Activated CD4-positive, alpha-beta T cell treated with anti-CD3 and anti-CD28 coated beads for 36 hours (primary cell): ENCODE measurements at regions of chr2 and their contacts with region 1.

Region 1: DNA sequence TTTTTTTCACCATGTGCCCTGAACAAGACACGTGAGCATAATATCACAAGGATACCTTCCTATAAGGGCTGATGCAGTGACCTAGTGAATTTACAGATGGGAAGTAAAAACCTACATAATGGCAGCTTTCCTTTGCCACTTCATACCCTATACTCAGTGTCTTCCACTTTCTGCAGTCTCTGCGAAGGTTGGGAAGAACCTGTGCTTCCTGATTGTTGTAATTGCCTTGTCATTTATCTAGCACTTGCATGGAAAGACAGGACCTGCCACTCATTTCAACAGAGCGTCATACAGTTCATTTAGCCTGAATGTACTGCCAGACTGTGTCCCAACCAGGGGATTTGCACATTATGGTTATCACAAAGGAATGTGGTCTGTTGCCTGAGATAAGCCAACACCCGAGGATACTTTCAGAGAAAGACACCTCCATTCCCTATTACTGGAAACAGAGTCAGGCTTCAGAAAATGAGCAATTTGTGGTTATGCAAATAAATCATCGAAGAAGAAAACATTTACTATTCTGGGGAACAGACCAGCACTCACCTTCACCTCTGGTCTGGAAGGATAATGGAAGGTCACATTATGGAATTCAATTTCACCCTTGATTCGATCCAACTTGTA is 55.0 kb downstream of the ABCB11 start:
- DNase-seq: no peak
- ATAC-seq: peak; percentile 45
- H3K4me3 Mint-ChIP-seq: no peak overlapping the region
- H3K27ac Mint-ChIP-seq: no peak overlapping the region
- H3K4me1 Mint-ChIP-seq: peaks cover 7% of the 10 kb centered on the region
- H3K27me3 Mint-ChIP-seq: no peaks in the 10 kb centered on the region

Region 2: GRCh38 chr2:168816369-168816768 is 159.8 kb before region 1 on chr2:
- CTCF ChIA-PET with region 1: no interaction called
- POLR2A ChIA-PET with region 1: no interaction called
- intact Hi-C with region 1: no loop called
- DNase-seq: no peak
- ATAC-seq: no peak
- H3K4me3 Mint-ChIP-seq: no peak overlapping the region
- H3K27ac Mint-ChIP-seq: no peak overlapping the region
- H3K4me1 Mint-ChIP-seq: no peaks in the 10 kb centered on the region
- H3K27me3 Mint-ChIP-seq: no peaks in the 10 kb centered on the region

Region 3: GRCh38 chr2:169069341-169069740 is 93.2 kb after region 1 on chr2 and contains the start of gene DHRS9:
- CTCF ChIA-PET with region 1: no interaction called
- POLR2A ChIA-PET with region 1: no interaction called
- intact Hi-C with region 1: loop called (anchors 2 kb)
- DNase-seq: peak; percentile 67
- ATAC-seq: peak; percentile 88
- H3K4me3 Mint-ChIP-seq: peak within 1 kb of the TSS; percentile 69
- H3K27ac Mint-ChIP-seq: peak within 1 kb of the TSS; percentile 70
- H3K4me1 Mint-ChIP-seq: peaks cover 42% of the 10 kb centered on the region
- H3K27me3 Mint-ChIP-seq: no peaks in the 10 kb centered on the region
- total RNA-seq, gene DHRS9: 4.1 to 4.8 TPM

Region 4: GRCh38 chr2:169090133-169090820 is 114.1 kb after region 1 on chr2:
- CTCF ChIA-PET with region 1: no interaction called
- POLR2A ChIA-PET with region 1: no interaction called
- intact Hi-C with region 1: no loop called
- DNase-seq: no peak
- ATAC-seq: no peak
- H3K4me3 Mint-ChIP-seq: no peak overlapping the region
- H3K27ac Mint-ChIP-seq: no peak overlapping the region
- H3K4me1 Mint-ChIP-seq: peaks cover 10% of the 10 kb centered on the region
- H3K27me3 Mint-ChIP-seq: peaks cover 6% of the 10 kb centered on the region

Region 5: DNA sequence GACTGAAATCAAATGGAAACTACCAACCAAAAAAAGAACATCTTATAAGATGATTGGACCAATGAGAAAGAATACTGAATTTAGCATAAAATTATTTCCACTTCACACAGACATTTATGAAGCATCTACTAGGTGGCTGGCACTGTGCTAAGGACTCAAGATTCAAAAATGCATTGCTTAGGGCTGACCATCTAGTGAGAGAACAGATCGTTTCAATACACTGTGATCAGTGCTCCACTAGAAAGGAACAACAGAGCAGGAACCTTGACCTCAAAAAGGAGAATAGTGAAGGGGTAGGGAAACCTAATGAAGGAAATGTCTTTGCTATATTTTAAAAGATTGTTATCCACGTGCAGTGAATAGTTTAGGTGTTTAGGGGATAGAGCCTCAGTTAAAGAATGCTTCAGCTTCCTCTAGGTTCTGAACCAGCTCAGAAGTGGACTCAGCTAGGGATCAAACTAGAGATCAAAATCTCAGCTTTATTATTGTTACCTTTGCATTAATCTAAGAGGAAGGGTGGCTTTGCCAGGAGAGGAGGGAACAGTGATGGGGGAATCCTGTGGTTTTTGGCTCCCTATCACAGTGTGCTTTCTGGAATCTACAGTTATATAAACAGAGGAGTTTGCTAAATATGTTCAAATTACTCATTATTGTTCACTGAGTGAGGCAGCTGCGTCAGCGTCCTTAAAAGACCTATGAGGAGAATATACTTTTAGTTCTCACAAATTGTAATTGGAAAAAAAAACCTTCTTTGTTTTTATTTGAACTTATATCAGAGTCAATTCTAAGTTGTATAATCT is 487.0 kb after region 1 on chr2:
- CTCF ChIA-PET with region 1: no interaction called
- POLR2A ChIA-PET with region 1: no interaction called
- intact Hi-C with region 1: loop called (anchors 5 kb)
- DNase-seq: no peak
- ATAC-seq: no peak
- H3K4me3 Mint-ChIP-seq: no peak overlapping the region
- H3K27ac Mint-ChIP-seq: no peak overlapping the region
- H3K4me1 Mint-ChIP-seq: no peaks in the 10 kb centered on the region
- H3K27me3 Mint-ChIP-seq: no peaks in the 10 kb centered on the region

Region 6: DNA sequence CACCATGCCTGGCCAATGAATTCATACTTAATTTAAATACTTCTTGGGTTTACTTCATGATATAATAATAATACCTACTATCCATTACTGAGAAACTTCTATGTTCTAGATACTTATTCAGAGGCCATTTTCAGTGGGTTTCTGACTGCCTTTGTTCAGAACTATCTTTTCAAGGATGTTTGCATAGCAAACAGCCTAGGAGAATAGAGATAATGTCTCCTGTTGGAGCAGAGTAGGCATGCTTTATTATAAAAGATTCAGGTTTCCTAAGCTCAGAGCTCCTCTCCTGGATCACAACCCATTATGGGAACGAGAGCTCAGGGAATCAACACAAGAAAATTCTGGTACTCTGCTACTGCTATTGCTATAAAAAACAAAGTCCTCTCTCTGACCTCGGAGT is 586.4 kb after region 1 on chr2:
- CTCF ChIA-PET with region 1: no interaction called
- POLR2A ChIA-PET with region 1: no interaction called
- intact Hi-C with region 1: loop called in 1 of 2 experiments (anchors 10 kb)
- DNase-seq: no peak
- ATAC-seq: no peak
- H3K4me3 Mint-ChIP-seq: no peak overlapping the region
- H3K27ac Mint-ChIP-seq: no peak overlapping the region
- H3K4me1 Mint-ChIP-seq: no peaks in the 10 kb centered on the region
- H3K27me3 Mint-ChIP-seq: no peaks in the 10 kb centered on the region